CD4-positive, alpha-beta memory T cell (primary cell): ENCODE measurements at regions of chr22 and their contacts with region 1.

Region 1: DNA sequence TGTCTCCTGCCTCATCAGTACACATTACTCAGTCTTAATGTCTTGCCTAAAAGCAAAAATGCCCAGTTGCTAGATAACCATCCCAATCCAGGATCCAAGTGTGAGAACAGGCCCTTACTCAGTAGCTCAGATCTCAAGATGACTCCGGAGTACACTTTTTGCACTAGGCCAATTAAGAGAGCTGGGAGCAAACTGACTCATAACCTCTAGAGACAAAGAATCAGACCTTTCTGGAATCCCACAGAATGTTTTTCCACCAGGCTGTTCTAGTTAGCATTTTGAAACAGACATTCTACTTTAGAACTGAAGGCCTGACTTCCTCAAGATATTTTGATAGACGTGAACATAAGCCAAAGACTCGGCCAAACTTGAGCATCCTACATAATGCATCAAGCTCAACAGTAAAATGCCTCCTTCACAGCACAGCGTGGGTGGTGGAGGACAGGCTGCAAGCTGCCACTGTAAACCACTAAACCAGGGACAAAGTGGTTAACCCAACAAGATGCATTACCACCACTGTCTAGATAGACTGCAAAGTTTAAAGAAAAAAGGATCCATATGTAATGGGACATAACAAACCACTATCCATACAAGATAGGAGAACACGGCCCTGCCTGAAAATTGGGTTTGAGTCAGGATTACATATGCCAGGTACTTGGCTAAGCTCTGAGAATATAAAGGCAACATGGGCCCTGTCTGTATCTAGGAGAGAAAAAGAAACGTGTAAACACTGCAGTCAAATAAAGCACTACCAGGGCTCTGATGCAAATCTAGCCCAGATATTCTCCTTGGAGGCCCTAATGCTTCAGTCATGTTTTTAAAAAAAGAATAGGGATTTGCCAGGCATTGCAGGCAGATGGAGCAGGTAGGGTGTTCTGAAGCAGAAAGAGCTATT is 48.3 kb downstream of the MYH9 start:
- DNase-seq: no peak
- H3K4me3 ChIP-seq: no peak overlapping the region
- H3K4me3 Mint-ChIP-seq: peak overlapping the region in 7 of 8 donors; percentile 44 to 75 (median 54)
- H3K27ac ChIP-seq: peak overlapping the region; percentile 47
- H3K27ac Mint-ChIP-seq: peak overlapping the region; percentile 87 to 99 (median 92)
- H3K4me1 ChIP-seq: peaks cover 100% of the 10 kb centered on the region
- H3K4me1 Mint-ChIP-seq: peaks cover 71 to 96% (median 85%) of the 10 kb centered on the region in 4 donors
- H3K27me3 ChIP-seq: no peaks in the 10 kb centered on the region
- H3K27me3 Mint-ChIP-seq: no peaks in the 10 kb centered on the region

Region 2: GRCh38 chr22:36350751-36351594 is 11.6 kb after region 1 on chr22:
- CTCF ChIA-PET with region 1: interaction called, 6 read pairs
- POLR2A ChIA-PET with region 1: interaction called, 2,535 read pairs
- intact Hi-C with region 1: loop called (anchors 1 kb)
- DNase-seq: peak in 1 of 5 donors; percentile 39
- H3K4me3 ChIP-seq: no peak overlapping the region
- H3K4me3 Mint-ChIP-seq: peak overlapping the region in 7 of 8 donors; percentile 62 to 89 (median 66)
- H3K27ac ChIP-seq: peak overlapping the region; percentile 64
- H3K27ac Mint-ChIP-seq: peak overlapping the region; percentile 90 to 95 (median 92)
- H3K4me1 ChIP-seq: peaks cover 94% of the 10 kb centered on the region
- H3K4me1 Mint-ChIP-seq: peaks cover 65 to 95% (median 79%) of the 10 kb centered on the region in 4 donors
- H3K27me3 ChIP-seq: no peaks in the 10 kb centered on the region
- H3K27me3 Mint-ChIP-seq: no peaks in the 10 kb centered on the region

Region 3: GRCh38 chr22:36359181-36359996 is 20.0 kb after region 1 on chr22:
- CTCF ChIA-PET with region 1: interaction called, 3 read pairs
- POLR2A ChIA-PET with region 1: interaction called, 2,535 read pairs
- intact Hi-C with region 1: loop called (anchors 2 kb)
- DNase-seq: peak in 1 of 5 donors; percentile 63
- H3K4me3 ChIP-seq: no peak overlapping the region
- H3K4me3 Mint-ChIP-seq: peak overlapping the region; percentile 35 to 89 (median 76)
- H3K27ac ChIP-seq: peak overlapping the region; percentile 55
- H3K27ac Mint-ChIP-seq: peak overlapping the region; percentile 91 to 98 (median 95)
- H3K4me1 ChIP-seq: peaks cover 100% of the 10 kb centered on the region
- H3K4me1 Mint-ChIP-seq: peaks cover 79 to 99% (median 91%) of the 10 kb centered on the region in 4 donors
- H3K27me3 ChIP-seq: no peaks in the 10 kb centered on the region
- H3K27me3 Mint-ChIP-seq: no peaks in the 10 kb centered on the region

Region 4: DNA sequence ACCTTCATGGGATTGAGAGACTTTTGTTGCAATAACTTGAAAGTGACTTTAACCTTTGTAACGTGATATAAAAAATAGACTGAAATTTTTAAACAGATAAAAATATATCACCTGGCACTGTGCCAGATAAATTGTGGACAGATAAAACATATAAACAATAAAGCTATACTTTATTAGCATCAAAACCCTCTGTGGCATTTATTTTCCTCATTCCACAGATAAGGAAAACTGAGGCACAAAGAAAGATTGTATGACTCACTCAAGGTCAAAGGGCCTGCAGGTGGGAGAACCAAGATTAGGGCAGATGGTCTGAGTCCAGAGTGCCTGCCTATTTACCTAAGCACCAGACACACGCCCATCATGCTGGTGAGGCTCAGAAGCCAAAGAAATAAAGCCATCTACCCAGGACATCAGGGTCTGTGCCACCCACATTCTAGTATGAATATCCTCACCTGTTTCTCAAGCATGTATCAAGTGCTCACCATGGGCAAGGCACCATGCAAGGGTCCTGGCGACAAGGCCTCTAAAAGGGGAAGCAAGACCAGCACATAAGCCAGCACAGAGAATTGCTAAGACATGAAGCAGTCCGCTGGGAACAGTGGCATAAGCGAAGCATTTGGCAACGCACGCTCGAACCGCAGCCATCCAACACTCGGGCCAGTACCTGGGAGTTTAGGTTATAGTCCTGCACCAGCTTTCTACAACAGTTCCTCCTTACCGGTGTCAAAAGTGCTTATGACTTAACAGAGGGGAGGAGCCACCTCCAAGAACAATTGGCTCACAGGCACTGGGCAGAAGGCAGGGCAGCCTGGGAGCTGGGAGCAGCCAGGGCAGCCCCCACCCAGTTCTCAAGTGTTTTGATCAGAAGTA is 30.7 kb after region 1 on chr22:
- CTCF ChIA-PET with region 1: interaction called, 12 read pairs
- POLR2A ChIA-PET with region 1: interaction called, 2,535 read pairs
- intact Hi-C with region 1: loop called (anchors 5 kb)
- DNase-seq: peak in 1 of 5 donors; percentile 65
- H3K4me3 ChIP-seq: peak overlapping the region in 1 of 2 donors; percentile 32
- H3K4me3 Mint-ChIP-seq: peak overlapping the region; percentile 84 to 93 (median 88)
- H3K27ac ChIP-seq: peak overlapping the region; percentile 91
- H3K27ac Mint-ChIP-seq: peak overlapping the region; percentile 92 to 99 (median 98)
- H3K4me1 ChIP-seq: peaks cover 100% of the 10 kb centered on the region
- H3K4me1 Mint-ChIP-seq: peaks cover 74 to 100% (median 87%) of the 10 kb centered on the region in 4 donors
- H3K27me3 ChIP-seq: no peaks in the 10 kb centered on the region
- H3K27me3 Mint-ChIP-seq: no peaks in the 10 kb centered on the region

Region 5: DNA sequence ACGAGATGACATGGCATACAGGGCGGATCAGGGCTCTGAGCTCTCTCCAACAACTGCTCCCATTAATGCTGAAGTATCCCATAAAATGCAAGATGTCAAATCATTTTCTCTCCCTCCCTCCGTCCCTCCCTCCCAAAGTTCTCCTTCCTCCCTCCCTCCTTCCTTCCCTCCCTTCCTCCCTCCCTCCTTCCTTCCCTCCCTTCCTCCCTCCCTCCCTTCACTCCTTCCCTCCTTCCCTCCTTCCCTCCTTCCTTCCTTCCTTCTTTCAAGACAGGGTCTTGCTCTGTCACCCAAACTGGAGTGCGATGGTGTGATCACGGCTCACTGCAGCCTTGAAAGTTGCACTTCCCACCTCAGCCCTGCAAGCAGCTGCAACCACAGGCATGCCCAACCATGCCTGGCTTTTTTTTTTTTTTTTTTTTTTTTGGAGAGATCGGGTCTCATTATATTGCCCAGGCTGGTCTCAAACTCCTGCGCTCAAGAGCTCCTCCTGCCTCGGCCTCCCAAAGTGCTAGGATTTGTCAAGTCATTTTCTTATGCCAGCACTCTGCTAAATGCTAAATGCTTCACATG is 103.9 kb after region 1 on chr22:
- CTCF ChIA-PET with region 1: no interaction called
- POLR2A ChIA-PET with region 1: no interaction called
- intact Hi-C with region 1: no loop called
- DNase-seq: no peak
- H3K4me3 ChIP-seq: no peak overlapping the region
- H3K4me3 Mint-ChIP-seq: no peak overlapping the region
- H3K27ac ChIP-seq: no peak overlapping the region
- H3K27ac Mint-ChIP-seq: no peak overlapping the region
- H3K4me1 ChIP-seq: peaks cover 18% of the 10 kb centered on the region
- H3K4me1 Mint-ChIP-seq: peaks cover 12 to 29% (median 21%) of the 10 kb centered on the region in 4 donors
- H3K27me3 ChIP-seq: no peaks in the 10 kb centered on the region
- H3K27me3 Mint-ChIP-seq: no peaks in the 10 kb centered on the region